Stomach (tissue), 19 donors: ENCODE measurements at regions of chr6 and their contacts with region 1.

Region 1: DNA sequence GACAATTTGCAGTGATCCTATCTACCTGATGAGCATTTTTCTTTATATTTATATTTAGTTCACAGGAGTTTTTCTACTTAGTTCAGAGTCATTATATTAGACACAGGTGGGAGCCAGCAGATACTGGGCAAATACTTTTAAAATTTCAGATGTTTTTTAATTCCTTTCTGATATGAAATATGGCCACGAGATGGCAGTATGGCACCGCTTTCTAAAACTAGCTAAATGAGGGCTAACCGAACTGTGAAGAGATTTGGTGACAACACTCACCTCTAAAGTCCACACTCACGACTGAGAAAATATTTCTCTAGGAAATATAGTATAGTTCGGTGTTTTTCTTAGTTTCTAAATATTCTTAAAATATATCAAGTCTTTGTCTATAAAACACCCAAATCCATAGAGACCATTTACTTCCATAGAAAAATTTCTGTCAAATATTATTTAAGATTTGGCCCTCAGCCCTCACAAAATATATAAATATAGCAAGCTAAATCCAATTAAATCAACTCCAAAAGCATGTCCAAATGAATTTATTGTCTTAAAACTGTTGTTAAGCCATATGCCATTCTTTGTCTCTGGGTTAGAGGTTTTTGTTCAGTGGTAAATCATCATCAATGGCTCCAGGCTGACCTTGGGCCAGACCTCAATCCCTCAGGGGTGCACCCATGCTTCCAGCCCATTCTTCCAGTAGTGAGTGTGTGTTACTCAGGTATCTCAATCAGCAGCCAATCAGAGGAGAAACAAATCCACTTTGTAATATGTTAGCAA is 63.6 kb downstream of the HUS1B start:
- DNase-seq: peak; percentile 58 to 84
- H3K4me3 ChIP-seq: no peak overlapping the region
- H3K27ac ChIP-seq: peak overlapping the region in 1 of 5 donors; percentile 12
- H3K4me1 ChIP-seq: no peaks in the 10 kb centered on the region
- H3K27me3 ChIP-seq: no peaks in the 10 kb centered on the region
- CTCF ChIP-seq: peak in 5 of 7 experiments; percentile 33 to 82 (median 55)
- EP300 ChIP-seq: no peak
- POLR2A ChIP-seq: no peak

Region 2: GRCh38 chr6:786946-787763 is 193.8 kb after region 1 on chr6:
- intact Hi-C with region 1: loop called (anchors 10 kb)
- DNase-seq: no peak
- H3K4me3 ChIP-seq: no peak overlapping the region
- H3K27ac ChIP-seq: no peak overlapping the region
- H3K4me1 ChIP-seq: no peaks in the 10 kb centered on the region
- H3K27me3 ChIP-seq: peaks cover 0 to 10% (median 0%) of the 10 kb centered on the region in 3 donors
- CTCF ChIP-seq: peak in 4 of 7 experiments; percentile 11 to 62 (median 47)
- EP300 ChIP-seq: no peak
- POLR2A ChIP-seq: no peak

Region 3: GRCh38 chr6:903761-904160 is 310.4 kb after region 1 on chr6:
- intact Hi-C with region 1: no loop called
- DNase-seq: no peak
- H3K4me3 ChIP-seq: no peak overlapping the region
- H3K27ac ChIP-seq: no peak overlapping the region
- H3K4me1 ChIP-seq: peaks cover 8 to 21% (median 15%) of the 10 kb centered on the region in 4 donors
- H3K27me3 ChIP-seq: no peaks in the 10 kb centered on the region
- CTCF ChIP-seq: no peak
- EP300 ChIP-seq: no peak
- POLR2A ChIP-seq: no peak

Region 4: DNA sequence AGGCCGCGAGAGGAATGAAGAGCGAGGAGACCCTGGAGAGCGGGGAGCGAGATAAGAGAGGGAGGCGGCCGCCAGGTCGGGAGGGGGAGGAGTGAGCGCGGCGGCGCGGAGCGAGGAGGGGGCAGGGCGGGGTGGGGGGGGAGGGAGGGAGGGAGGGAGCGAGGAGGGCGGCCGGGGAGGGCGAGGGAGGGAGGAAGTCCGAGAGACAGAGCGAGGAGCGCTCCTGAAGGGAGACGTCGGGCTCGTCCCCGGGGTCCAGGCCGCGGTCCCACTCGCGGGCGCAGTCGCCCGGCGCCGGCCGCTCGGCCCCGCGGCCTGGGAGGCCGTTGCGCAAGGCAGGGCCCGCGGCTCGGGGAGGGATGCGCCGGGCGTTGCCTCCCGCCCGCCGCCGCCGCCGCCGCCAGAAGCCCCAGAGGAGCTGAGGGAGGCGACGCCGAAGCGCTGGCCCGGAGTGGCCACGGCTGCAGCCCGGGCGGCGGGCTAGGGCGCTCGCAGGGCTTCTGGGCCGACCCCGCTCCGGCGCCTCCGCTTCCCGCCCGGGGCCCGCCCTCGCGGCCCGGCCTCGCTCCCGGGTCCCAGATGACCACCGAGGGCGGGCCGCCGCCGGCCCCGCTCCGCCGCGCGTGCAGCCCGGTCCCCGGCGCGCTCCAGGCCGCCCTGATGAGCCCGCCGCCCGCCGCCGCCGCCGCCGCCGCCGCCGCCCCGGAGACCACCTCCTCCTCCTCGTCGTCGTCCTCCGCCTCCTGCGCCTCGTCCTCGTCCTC is 796.2 kb after region 1 on chr6 and contains the start of gene FOXF2:
- intact Hi-C with region 1: loop called (anchors 5 kb)
- DNase-seq: peak in 1 of 2 donors; percentile 67
- H3K4me3 ChIP-seq: peak within 1 kb of the TSS; percentile 56 to 61 (median 60)
- H3K27ac ChIP-seq: peak within 1 kb of the TSS; percentile 72 to 90 (median 83)
- H3K4me1 ChIP-seq: peaks cover 9 to 75% (median 55%) of the 10 kb centered on the region in 4 donors
- H3K27me3 ChIP-seq: peaks cover 11 to 100% (median 92%) of the 10 kb centered on the region in 3 donors
- CTCF ChIP-seq: no peak
- EP300 ChIP-seq: no peak
- POLR2A ChIP-seq: no peak
- total RNA-seq, gene FOXF2: 9.6 to 104 (median 14.1) TPM